Caco-2 (cell line): ENCODE measurements at regions of chr7 and their contacts with region 1.

Region 1: DNA sequence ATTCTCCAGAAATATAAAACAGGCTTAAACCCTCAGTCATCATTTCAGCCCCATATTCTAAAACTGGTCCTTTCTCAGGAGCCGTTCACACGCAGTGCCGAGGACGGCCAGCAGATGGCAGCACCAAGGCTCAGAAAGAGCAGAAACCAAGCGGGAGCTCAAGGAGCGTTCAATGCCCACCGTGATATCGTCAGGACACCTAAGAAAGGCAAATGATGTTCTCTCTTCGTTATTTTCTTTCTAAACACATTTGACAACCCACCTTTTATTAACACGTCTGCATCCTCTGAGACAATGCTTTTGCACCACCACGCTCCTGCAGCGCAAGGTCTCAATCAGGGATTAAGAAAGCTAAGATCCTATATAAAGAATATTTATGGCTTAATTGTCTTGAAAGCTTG is 45.7 kb upstream of the RBM33 start:
- DNase-seq: peak; percentile 81 to 90
- H3K4me3 ChIP-seq: no peak overlapping the region
- H3K4me3 Mint-ChIP-seq: peak overlapping the region; percentile 47
- H3K27ac Mint-ChIP-seq: no peak overlapping the region
- H3K4me1 ChIP-seq: peaks cover 17% of the 10 kb centered on the region
- H3K4me1 Mint-ChIP-seq: peaks cover 7% of the 10 kb centered on the region
- H3K27me3 ChIP-seq: no peaks in the 10 kb centered on the region
- H3K27me3 Mint-ChIP-seq: no peaks in the 10 kb centered on the region
- CTCF ChIP-seq: peak; percentile 88 to 97

Region 2: GRCh38 chr7:155097344-155097743 is 501.5 kb before region 1 on chr7:
- CTCF ChIA-PET with region 1: no interaction called
- POLR2A ChIA-PET with region 1: no interaction called
- intact Hi-C with region 1: no loop called
- DNase-seq: no peak
- H3K4me3 ChIP-seq: no peak overlapping the region
- H3K4me3 Mint-ChIP-seq: no peak overlapping the region
- H3K27ac Mint-ChIP-seq: no peak overlapping the region
- H3K4me1 ChIP-seq: no peaks in the 10 kb centered on the region
- H3K4me1 Mint-ChIP-seq: no peaks in the 10 kb centered on the region
- H3K27me3 ChIP-seq: no peaks in the 10 kb centered on the region
- H3K27me3 Mint-ChIP-seq: peaks cover 14% of the 10 kb centered on the region
- CTCF ChIP-seq: no peak

Region 3: DNA sequence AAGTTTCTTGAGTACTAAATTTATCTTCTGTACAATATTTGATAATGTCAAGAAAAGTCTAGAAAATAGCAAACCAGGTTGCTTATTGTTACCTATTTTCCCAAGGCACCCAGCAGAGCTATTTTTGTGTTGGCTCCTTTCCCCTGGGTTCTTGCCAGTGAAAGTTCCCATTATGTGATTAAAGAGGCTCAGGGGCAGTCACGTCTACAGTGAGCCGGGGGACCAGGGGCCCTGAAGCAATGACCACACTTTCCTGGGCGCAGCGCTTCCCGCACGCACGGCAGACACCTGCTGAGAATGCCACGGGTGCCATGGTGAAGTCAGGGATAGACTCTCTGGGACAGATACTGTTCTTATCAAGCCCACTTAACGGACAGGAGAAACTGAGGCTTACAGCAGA is 42.0 kb before region 1 on chr7:
- CTCF ChIA-PET with region 1: no interaction called
- POLR2A ChIA-PET with region 1: interaction called, 10 read pairs
- intact Hi-C with region 1: no loop called
- DNase-seq: no peak
- H3K4me3 ChIP-seq: no peak overlapping the region
- H3K4me3 Mint-ChIP-seq: no peak overlapping the region
- H3K27ac Mint-ChIP-seq: no peak overlapping the region
- H3K4me1 ChIP-seq: no peaks in the 10 kb centered on the region
- H3K4me1 Mint-ChIP-seq: no peaks in the 10 kb centered on the region
- H3K27me3 ChIP-seq: no peaks in the 10 kb centered on the region
- H3K27me3 Mint-ChIP-seq: no peaks in the 10 kb centered on the region
- CTCF ChIP-seq: no peak

Region 4: GRCh38 chr7:155644178-155644970 is 45.6 kb after region 1 on chr7 and contains the start of gene RBM33:
- CTCF ChIA-PET with region 1: interaction called, 13 read pairs
- POLR2A ChIA-PET with region 1: interaction called, 6 read pairs
- intact Hi-C with region 1: loop called (anchors 1 kb)
- DNase-seq: peak; percentile 91 to 93
- H3K4me3 ChIP-seq: peak within 1 kb of the TSS; percentile 95
- H3K4me3 Mint-ChIP-seq: peak within 1 kb of the TSS; percentile 98
- H3K27ac Mint-ChIP-seq: peak within 1 kb of the TSS; percentile 98
- H3K4me1 ChIP-seq: peaks cover 15% of the 10 kb centered on the region
- H3K4me1 Mint-ChIP-seq: peaks cover 29% of the 10 kb centered on the region
- H3K27me3 ChIP-seq: no peaks in the 10 kb centered on the region
- H3K27me3 Mint-ChIP-seq: no peaks in the 10 kb centered on the region
- CTCF ChIP-seq: no peak
- total RNA-seq, gene RBM33: 82.8 and 89.9 TPM in 2 replicates

Region 5: GRCh38 chr7:155702616-155703015 is 103.8 kb after region 1 on chr7:
- CTCF ChIA-PET with region 1: interaction called, 4 read pairs
- POLR2A ChIA-PET with region 1: no interaction called
- intact Hi-C with region 1: loop called (anchors 1 kb)
- DNase-seq: no peak
- H3K4me3 ChIP-seq: no peak overlapping the region
- H3K4me3 Mint-ChIP-seq: no peak overlapping the region
- H3K27ac Mint-ChIP-seq: no peak overlapping the region
- H3K4me1 ChIP-seq: peaks cover 6% of the 10 kb centered on the region; the same call in 1 of the 2 replicates
- H3K4me1 Mint-ChIP-seq: peaks cover 9% of the 10 kb centered on the region
- H3K27me3 ChIP-seq: no peaks in the 10 kb centered on the region
- H3K27me3 Mint-ChIP-seq: no peaks in the 10 kb centered on the region
- CTCF ChIP-seq: no peak

Region 6: GRCh38 chr7:155738652-155739537 is 140.1 kb after region 1 on chr7:
- CTCF ChIA-PET with region 1: interaction called, 5 read pairs
- POLR2A ChIA-PET with region 1: no interaction called
- intact Hi-C with region 1: loop called (anchors 1 kb)
- DNase-seq: peak; percentile 77 to 79
- H3K4me3 ChIP-seq: no peak overlapping the region
- H3K4me3 Mint-ChIP-seq: no peak overlapping the region
- H3K27ac Mint-ChIP-seq: no peak overlapping the region
- H3K4me1 ChIP-seq: no peaks in the 10 kb centered on the region
- H3K4me1 Mint-ChIP-seq: no peaks in the 10 kb centered on the region
- H3K27me3 ChIP-seq: no peaks in the 10 kb centered on the region
- H3K27me3 Mint-ChIP-seq: no peaks in the 10 kb centered on the region
- CTCF ChIP-seq: peak; percentile 76 to 82